CD8-positive, alpha-beta T cell (primary cell): ENCODE measurements at regions of chr11 and their contacts with region 1.

Region 1: DNA sequence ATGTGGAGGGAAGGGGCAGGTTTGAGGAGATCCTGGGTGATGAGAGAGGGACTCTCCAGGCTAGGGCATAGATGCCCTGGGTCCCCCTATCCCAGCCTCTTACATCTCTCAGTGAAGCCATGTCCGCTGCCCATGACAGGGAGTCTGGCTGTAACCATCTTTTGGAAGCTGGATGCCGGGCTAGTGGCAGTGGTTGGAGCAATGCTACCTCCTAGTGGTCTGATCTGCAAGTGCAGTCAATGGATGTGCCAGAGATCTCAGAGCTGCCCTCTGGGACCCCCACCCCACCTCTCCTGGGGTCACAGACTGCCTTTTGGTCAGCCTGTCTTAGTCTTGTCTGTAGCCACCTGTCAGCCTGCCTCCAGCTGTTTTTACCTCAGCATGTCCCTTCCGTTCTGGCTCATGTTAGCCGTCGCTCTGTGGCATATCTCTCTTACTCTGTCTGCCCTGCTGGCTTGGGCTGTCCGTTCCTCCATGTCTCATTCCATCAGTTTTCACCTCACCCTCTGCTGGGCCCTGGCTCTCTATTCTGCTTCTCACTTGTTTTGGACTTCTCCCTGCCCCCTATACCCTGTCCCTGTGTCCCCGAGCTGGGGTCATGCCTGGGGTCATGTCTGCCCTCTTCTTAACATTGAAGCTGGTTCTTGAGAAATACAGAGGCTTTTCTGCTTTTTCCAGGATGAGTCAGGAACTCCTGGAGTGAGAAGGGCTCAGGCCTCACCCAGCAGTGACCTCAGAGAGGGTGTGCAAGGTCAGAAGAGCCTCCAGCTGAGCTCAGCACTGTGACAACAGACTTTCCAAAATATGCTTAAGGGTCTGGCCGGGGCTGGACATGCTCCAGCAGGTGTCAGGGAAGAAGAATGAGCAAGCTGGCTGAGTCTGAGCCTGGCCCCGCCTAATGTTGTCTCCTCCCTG is 52.0 kb upstream of the THY1 start:
- DNase-seq: peak; percentile 10 to 71 (median 48)
- ATAC-seq: peak; percentile 75
- H3K4me3 ChIP-seq: no peak overlapping the region
- H3K4me3 Mint-ChIP-seq: no peak overlapping the region
- H3K27ac ChIP-seq: no peak overlapping the region
- H3K27ac Mint-ChIP-seq: no peak overlapping the region
- H3K4me1 ChIP-seq: no peaks in the 10 kb centered on the region
- H3K4me1 Mint-ChIP-seq: no peaks in the 10 kb centered on the region
- H3K27me3 ChIP-seq: no peaks in the 10 kb centered on the region
- H3K27me3 Mint-ChIP-seq: peaks cover 34% of the 10 kb centered on the region
- CTCF ChIP-seq: peak; percentile 69

Region 2: DNA sequence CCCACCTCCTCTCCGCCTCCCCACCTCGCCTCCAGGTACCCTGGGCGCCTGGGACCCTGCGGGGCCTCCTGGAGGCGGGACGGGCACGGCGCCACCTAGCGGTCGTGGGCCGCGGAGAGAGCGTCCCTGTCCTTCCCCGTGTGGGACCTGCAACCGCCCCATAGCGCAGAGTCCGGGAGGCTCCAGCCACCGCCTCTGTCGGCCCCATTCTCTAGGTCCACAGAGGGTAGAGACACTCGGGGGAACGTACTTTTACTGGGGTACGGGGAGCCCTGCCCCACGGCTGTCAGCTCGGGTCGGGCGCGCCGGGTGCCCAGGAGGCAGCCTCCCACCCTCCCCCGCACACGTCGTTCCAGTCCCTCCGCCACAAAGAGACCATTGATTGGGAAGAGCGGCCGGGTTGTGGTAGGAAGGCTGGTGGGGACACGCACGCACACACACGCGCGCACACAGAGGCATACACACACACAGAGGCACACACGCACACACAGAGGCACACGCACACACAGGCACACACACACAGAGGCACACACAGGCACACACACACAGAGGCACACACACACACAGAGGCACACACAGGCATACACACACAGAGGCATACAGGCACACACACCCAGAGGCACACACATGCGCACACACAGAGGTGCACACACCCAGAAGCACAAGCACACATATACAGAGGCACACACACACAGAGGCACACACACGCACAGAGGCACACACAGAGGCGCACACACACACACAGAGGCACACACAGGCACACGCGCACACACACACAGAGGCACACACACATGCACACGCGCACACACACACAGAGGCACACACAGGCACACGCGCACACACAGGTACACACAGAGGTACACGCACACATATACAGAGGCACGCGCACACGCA is 266.7 kb after region 1 on chr11:
- CTCF ChIA-PET with region 1: no interaction called
- POLR2A ChIA-PET with region 1: no interaction called
- intact Hi-C with region 1: loop called in 1 of 2 experiments (anchors 5 kb)
- DNase-seq: peak; percentile 31 to 77 (median 62)
- ATAC-seq: peak; percentile 71
- H3K4me3 ChIP-seq: no peak overlapping the region
- H3K4me3 Mint-ChIP-seq: peak overlapping the region; percentile 64
- H3K27ac ChIP-seq: no peak overlapping the region
- H3K27ac Mint-ChIP-seq: no peak overlapping the region
- H3K4me1 ChIP-seq: peaks cover 7% of the 10 kb centered on the region
- H3K4me1 Mint-ChIP-seq: peaks cover 13% of the 10 kb centered on the region
- H3K27me3 ChIP-seq: peaks cover 0 to 16% of the 10 kb centered on the region in 2 experiments
- H3K27me3 Mint-ChIP-seq: peaks cover 41% of the 10 kb centered on the region
- CTCF ChIP-seq: peak; percentile 75